ENCODE measurements at regions of chr7 and their contacts with region 1.

Region 1: GRCh38 chr7:44565097-44565794 is 8.5 kb downstream of the DDX56 start:
- DNase-seq: peak; percentile 73
- ATAC-seq: peak; percentile 91
- H3K4me3 Mint-ChIP-seq: no peak overlapping the region
- H3K27ac Mint-ChIP-seq: peak overlapping the region; percentile 41
- H3K4me1 Mint-ChIP-seq: no peaks in the 10 kb centered on the region
- H3K27me3 Mint-ChIP-seq: no peaks in the 10 kb centered on the region

Region 2: GRCh38 chr7:44240983-44241510 is 324.2 kb before region 1 on chr7:
- CTCF ChIA-PET with region 1: interaction called, 37 read pairs
- DNase-seq: peak; percentile 75
- ATAC-seq: peak; percentile 90
- H3K4me3 Mint-ChIP-seq: no peak overlapping the region
- H3K27ac Mint-ChIP-seq: no peak overlapping the region
- H3K4me1 Mint-ChIP-seq: peaks cover 2% of the 10 kb centered on the region
- H3K27me3 Mint-ChIP-seq: no peaks in the 10 kb centered on the region

Region 3: DNA sequence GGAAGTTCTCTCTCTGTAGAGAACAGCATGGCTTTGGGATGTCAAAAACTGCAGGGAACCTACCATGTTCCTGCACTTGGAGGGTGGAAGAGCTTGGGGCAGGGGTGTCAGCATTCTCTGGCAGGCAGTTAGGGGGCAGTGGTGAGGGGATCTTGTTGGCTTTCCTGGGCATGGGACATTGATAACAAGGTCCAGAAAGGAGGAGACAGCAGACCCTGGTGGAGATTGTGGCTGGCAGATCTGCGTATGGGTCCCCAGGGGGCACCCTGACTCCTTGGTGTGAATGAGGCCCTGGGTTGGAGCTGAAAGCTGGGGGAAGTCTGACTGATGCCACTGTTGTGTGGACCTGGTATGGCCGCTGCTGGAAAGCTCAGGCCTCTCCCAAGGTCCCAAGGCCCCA is 216.9 kb before region 1 on chr7:
- CTCF ChIA-PET with region 1: interaction called, 15 read pairs
- DNase-seq: no peak
- ATAC-seq: peak; percentile 45
- H3K4me3 Mint-ChIP-seq: no peak overlapping the region
- H3K27ac Mint-ChIP-seq: no peak overlapping the region
- H3K4me1 Mint-ChIP-seq: no peaks in the 10 kb centered on the region
- H3K27me3 Mint-ChIP-seq: peaks cover 53% of the 10 kb centered on the region

Region 4: GRCh38 chr7:44375236-44375699 is 190.0 kb before region 1 on chr7:
- CTCF ChIA-PET with region 1: interaction called, 10 read pairs
- DNase-seq: no peak
- ATAC-seq: no peak
- H3K4me3 Mint-ChIP-seq: no peak overlapping the region
- H3K27ac Mint-ChIP-seq: no peak overlapping the region
- H3K4me1 Mint-ChIP-seq: peaks cover 5% of the 10 kb centered on the region
- H3K27me3 Mint-ChIP-seq: peaks cover 15% of the 10 kb centered on the region

Region 5: DNA sequence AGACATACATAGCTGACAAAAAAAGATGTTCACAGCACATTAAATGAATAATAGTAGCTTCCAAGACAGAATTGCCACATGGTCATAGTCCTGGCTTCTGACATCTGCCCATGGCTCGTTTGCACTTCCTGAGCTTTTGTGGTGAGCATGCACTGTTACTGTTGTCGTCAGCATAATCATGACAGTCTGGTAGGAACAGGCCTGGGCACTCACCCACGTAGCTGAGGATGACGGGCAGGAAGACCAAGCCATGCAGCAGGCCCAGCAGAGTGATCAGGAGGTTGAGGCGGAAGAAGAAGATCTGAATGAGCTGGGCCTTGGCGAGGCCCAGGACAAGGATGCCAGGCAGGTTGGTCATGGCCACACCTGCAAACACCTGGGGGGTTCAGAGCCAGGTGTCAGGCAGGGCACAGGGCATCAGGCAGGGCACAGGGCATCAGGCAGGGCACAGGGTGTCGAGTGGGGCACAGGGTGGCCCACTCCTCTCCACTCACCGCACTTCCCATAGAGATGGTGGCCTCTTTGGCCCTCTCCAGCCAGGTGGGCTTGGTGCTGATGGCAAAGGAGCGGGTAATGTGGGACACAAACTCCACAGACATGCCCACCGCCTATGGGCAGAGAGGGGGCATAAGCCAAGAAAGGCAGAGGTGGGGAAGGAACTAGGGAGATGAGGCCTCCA is 49.5 kb before region 1 on chr7:
- CTCF ChIA-PET with region 1: no interaction called
- DNase-seq: no peak
- ATAC-seq: no peak
- H3K4me3 Mint-ChIP-seq: no peak overlapping the region
- H3K27ac Mint-ChIP-seq: no peak overlapping the region
- H3K4me1 Mint-ChIP-seq: no peaks in the 10 kb centered on the region
- H3K27me3 Mint-ChIP-seq: no peaks in the 10 kb centered on the region

Region 6: DNA sequence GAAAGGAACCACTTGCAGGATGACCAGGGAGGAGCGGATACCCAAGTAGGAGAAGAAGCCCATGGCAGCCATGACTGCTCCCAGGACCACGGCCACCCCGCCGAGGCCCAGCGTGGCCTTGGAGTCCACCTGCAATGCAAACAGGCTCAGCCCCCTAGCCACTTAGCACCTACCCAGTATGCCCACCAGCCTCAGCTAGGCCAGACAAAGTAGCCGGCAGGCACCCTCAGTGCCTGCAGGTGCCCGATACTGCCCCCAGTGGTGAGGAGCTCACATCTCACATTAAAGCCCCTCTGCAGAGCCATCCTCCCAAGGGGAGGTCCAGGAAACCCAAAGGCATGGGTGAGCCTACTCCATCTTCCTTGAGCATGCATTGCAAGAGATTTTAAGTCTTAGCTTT is 30.7 kb before region 1 on chr7:
- CTCF ChIA-PET with region 1: interaction called, 12 read pairs
- DNase-seq: peak; percentile 62
- ATAC-seq: peak; percentile 77
- H3K4me3 Mint-ChIP-seq: no peak overlapping the region
- H3K27ac Mint-ChIP-seq: no peak overlapping the region
- H3K4me1 Mint-ChIP-seq: no peaks in the 10 kb centered on the region
- H3K27me3 Mint-ChIP-seq: no peaks in the 10 kb centered on the region

Measured in activated CD8-positive, alpha-beta memory T cell treated with anti-CD3 and anti-CD28 coated beads, Interleukin-2, amount 10 ng/mL, durations not matched to agents 7 days and 5 days (primary cell).